PC-3 (cell line): ENCODE measurements at regions of chr6 and their contacts with region 1.

Region 1: DNA sequence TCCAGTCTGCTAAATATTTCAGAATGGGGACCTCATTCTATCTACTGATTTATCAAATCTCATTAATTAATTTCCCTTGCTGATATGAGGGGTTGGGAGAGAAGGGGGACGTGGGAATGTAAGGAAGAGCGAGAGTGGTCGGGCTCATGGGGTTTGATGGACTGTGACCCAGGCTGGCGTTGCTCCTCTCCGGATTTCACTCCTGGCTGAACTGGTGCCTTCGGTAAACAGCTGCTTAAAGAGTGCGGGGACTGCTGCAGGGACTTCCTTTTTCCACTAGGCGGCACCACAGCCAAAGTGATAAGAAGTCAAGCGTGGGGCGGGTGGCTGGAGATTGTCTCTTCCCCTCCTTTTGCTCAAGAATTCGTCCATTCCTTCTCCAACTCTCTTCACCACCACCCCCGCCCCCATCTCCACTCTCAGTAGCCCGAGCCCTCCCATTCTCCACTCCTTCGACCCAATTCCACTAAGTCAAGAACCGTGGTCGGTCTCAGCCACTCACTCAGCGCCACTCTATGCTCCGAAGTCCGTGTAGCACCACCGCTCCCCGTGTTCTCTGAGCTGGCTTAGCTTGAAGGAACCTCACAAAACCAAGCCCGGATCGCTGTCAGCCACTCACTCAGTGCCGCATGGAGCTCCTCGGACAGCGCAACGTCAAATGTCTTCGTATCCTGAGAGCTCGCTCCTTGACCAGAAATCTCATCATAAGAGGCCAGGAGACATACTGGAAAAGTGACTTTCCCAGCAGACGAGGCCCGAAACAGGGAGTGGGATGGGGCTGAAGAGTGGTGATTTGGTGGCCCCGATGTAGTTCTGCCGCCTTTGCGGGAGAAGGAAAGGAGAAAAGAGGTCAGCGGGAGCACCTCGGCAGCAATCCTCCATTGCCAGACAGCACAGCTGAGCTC is 9.7 kb downstream of the TRIM31 start:
- DNase-seq: peak; percentile 94
- ATAC-seq: peak; percentile 55
- H3K4me3 ChIP-seq: peak overlapping the region; percentile 75
- H3K27ac ChIP-seq: no peak overlapping the region
- H3K4me1 ChIP-seq: peaks cover 31% of the 10 kb centered on the region
- H3K27me3 ChIP-seq: no peaks in the 10 kb centered on the region
- CTCF ChIP-seq: peak; percentile 87

Region 2: GRCh38 chr6:29791786-29792122 is 311.5 kb before region 1 on chr6:
- CTCF ChIA-PET with region 1: no interaction called
- POLR2A ChIA-PET with region 1: no interaction called
- intact Hi-C with region 1: loop called (anchors 2 kb)
- DNase-seq: peak; percentile 10
- ATAC-seq: peak; percentile 1; the same call in 1 of the 2 replicates
- H3K4me3 ChIP-seq: peak overlapping the region; percentile 82
- H3K27ac ChIP-seq: peak overlapping the region; percentile 65
- H3K4me1 ChIP-seq: peaks cover 23% of the 10 kb centered on the region
- H3K27me3 ChIP-seq: no peaks in the 10 kb centered on the region
- CTCF ChIP-seq: no peak

Region 3: GRCh38 chr6:30066577-30067459 is 36.4 kb before region 1 on chr6 and contains the start of gene PPP1R11:
- CTCF ChIA-PET with region 1: no interaction called
- POLR2A ChIA-PET with region 1: no interaction called
- intact Hi-C with region 1: loop called (anchors 2 kb)
- DNase-seq: peak; percentile 99
- ATAC-seq: peak; percentile 98
- H3K4me3 ChIP-seq: peak within 1 kb of the TSS; percentile 70
- H3K27ac ChIP-seq: peak within 1 kb of the TSS; percentile 40
- H3K4me1 ChIP-seq: peaks cover 26% of the 10 kb centered on the region
- H3K27me3 ChIP-seq: no peaks in the 10 kb centered on the region
- CTCF ChIP-seq: no peak
- total RNA-seq, gene PPP1R11: 49.5 and 58.8 TPM in 2 replicates

Region 4: GRCh38 chr6:30075161-30075986 is 27.8 kb before region 1 on chr6 and contains the start of gene RNF39:
- CTCF ChIA-PET with region 1: interaction called, 3 read pairs
- POLR2A ChIA-PET with region 1: no interaction called
- intact Hi-C with region 1: loop called (anchors 2 kb)
- DNase-seq: peak; percentile 78
- ATAC-seq: peak; percentile 54
- H3K4me3 ChIP-seq: peak within 1 kb of the TSS; percentile 75
- H3K27ac ChIP-seq: no peak within 1 kb of the TSS
- H3K4me1 ChIP-seq: peaks cover 40% of the 10 kb centered on the region
- H3K27me3 ChIP-seq: 0 out of 2 replicates have a peak, but pooled peaks cover 3% of the 10 kb centered on the region
- CTCF ChIP-seq: peak; percentile 70
- total RNA-seq, gene RNF39: 2.0 and 4.2 TPM in 2 replicates

Region 5: DNA sequence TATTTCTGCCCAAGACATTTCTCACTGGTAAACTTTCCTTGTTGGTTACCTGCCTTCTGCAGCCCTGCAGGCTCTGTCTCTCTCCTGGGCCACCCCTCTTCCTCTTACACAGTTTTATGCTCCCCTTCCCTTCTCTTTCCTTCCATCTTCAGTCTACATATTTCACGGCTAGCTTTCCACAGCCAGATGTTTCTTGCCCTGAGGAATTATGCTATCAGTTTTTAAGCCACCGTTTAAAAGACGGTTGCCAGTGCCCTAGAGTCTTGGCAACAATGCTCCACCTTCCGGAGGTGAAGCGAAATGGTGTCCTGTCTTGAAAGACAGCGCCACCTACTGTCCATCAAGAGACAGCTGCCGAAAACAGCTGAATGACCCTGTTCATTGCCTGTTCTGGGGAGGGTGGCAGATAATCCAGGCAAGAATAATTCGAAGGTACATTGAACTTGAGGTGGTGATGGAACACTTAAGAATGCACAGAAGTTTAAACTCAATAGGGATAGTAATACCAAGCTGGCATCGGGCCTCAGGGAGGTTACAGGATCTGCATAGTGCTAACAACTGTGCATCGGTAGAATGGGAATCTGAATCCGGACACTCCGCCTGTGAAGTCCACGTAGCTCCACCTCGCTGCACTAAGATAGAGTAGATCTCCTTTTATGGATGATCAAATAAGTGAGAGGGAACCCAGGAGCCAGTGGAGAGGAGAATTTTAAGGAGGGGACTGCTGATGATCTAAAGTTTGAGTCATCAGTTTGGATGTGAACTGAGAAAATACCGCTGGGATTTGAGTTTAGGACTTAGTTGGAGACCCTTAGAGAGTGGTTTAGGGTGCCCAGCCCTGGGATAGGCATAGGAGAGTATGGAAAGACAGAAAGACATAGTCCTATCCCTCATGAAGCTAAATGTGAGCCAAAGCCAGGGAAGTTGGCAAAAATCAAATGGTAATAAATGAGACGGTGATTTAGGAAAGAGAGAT is 28.0 kb after region 1 on chr6:
- CTCF ChIA-PET with region 1: interaction called, 107 read pairs
- POLR2A ChIA-PET with region 1: no interaction called
- intact Hi-C with region 1: loop called (anchors 1 kb)
- DNase-seq: peak; percentile 87
- ATAC-seq: peak; percentile 93
- H3K4me3 ChIP-seq: peak overlapping the region; percentile 55
- H3K27ac ChIP-seq: no peak overlapping the region
- H3K4me1 ChIP-seq: peaks cover 23% of the 10 kb centered on the region
- H3K27me3 ChIP-seq: no peaks in the 10 kb centered on the region
- CTCF ChIP-seq: peak; percentile 100

Region 6: GRCh38 chr6:30154709-30155519 is 51.7 kb after region 1 on chr6:
- CTCF ChIA-PET with region 1: no interaction called
- POLR2A ChIA-PET with region 1: no interaction called
- intact Hi-C with region 1: no loop called
- DNase-seq: peak; percentile 93
- ATAC-seq: peak; percentile 94
- H3K4me3 ChIP-seq: peak overlapping the region; percentile 8; the same call in 1 of the 2 replicates
- H3K27ac ChIP-seq: peak overlapping the region; percentile 69
- H3K4me1 ChIP-seq: peaks cover 32% of the 10 kb centered on the region
- H3K27me3 ChIP-seq: no peaks in the 10 kb centered on the region
- CTCF ChIP-seq: no peak